Mammary epithelial cell (primary cell): ENCODE measurements at regions of chr3 and their contacts with region 1.

Region 1: DNA sequence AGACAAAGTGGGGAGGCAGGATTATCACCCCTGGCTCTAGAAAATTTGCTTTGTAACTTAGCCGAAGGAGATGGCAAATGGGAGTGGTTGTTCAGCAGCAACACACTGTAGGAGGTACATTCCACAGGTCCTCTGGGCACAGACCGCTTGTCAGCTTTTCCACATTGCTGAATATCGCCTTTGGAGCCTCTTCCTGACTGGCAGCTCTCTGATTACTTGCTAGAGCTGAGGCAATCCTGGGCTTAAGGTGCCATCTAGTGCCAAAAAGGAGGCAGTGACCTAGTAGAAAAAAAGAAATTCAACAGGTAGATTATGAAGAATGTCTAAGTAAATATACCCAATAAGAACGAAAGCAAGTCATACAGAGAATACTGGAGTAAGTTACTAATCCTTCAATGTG is 13.1 kb upstream of the SCN5A start:
- DNase-seq: peak; percentile 57
- H3K4me3 ChIP-seq: no peak overlapping the region
- H3K27ac ChIP-seq: no peak overlapping the region
- H3K4me1 ChIP-seq: peaks cover 11% of the 10 kb centered on the region
- H3K27me3 ChIP-seq: no peaks in the 10 kb centered on the region
- CTCF ChIP-seq: peak; percentile 72 to 84

Region 2: GRCh38 chr3:38346587-38347410 is 315.7 kb before region 1 on chr3 and contains the start of gene XYLB:
- CTCF ChIA-PET with region 1: no interaction called
- dilution Hi-C with region 1: no loop called
- in situ Hi-C with region 1: no loop called
- intact Hi-C with region 1: loop called (anchors 5 kb)
- DNase-seq: peak; percentile 75
- H3K4me3 ChIP-seq: peak within 1 kb of the TSS; percentile 76 to 91 (median 90)
- H3K27ac ChIP-seq: no peak within 1 kb of the TSS
- H3K4me1 ChIP-seq: peaks cover 4% of the 10 kb centered on the region
- H3K27me3 ChIP-seq: no peaks in the 10 kb centered on the region
- CTCF ChIP-seq: peak; percentile 59 to 88
- total RNA-seq, gene XYLB: 3.0 to 4.5 TPM

Region 3: GRCh38 chr3:38698760-38699159 is 36.2 kb after region 1 on chr3:
- CTCF ChIA-PET with region 1: no interaction called
- dilution Hi-C with region 1: no loop called
- in situ Hi-C with region 1: no loop called
- intact Hi-C with region 1: no loop called
- DNase-seq: no peak
- H3K4me3 ChIP-seq: no peak overlapping the region
- H3K27ac ChIP-seq: no peak overlapping the region
- H3K4me1 ChIP-seq: no peaks in the 10 kb centered on the region
- H3K27me3 ChIP-seq: peaks cover 2% of the 10 kb centered on the region
- CTCF ChIP-seq: no peak

Region 4: GRCh38 chr3:39025222-39025970 is 362.9 kb after region 1 on chr3:
- CTCF ChIA-PET with region 1: no interaction called
- dilution Hi-C with region 1: no loop called
- in situ Hi-C with region 1: no loop called
- intact Hi-C with region 1: loop called (anchors 2 kb)
- DNase-seq: no peak
- H3K4me3 ChIP-seq: no peak overlapping the region
- H3K27ac ChIP-seq: no peak overlapping the region
- H3K4me1 ChIP-seq: peaks cover 9% of the 10 kb centered on the region
- H3K27me3 ChIP-seq: peaks cover 7% of the 10 kb centered on the region
- CTCF ChIP-seq: no peak